CD8-positive, alpha-beta T cell (primary cell): ENCODE measurements at regions of chr1 and their contacts with region 1.

Region 1: GRCh38 chr1:100400404-100400803 is 48.1 kb downstream of the CDC14A start:
- DNase-seq: peak; percentile 39 to 90 (median 66)
- ATAC-seq: peak; percentile 82
- H3K4me3 ChIP-seq: peak overlapping the region; percentile 13 to 19
- H3K4me3 Mint-ChIP-seq: peak overlapping the region; percentile 73
- H3K27ac ChIP-seq: peak overlapping the region; percentile 59 to 80
- H3K27ac Mint-ChIP-seq: peak overlapping the region; percentile 92
- H3K4me1 ChIP-seq: peaks cover 93% of the 10 kb centered on the region
- H3K4me1 Mint-ChIP-seq: peaks cover 86% of the 10 kb centered on the region
- H3K27me3 ChIP-seq: no peaks in the 10 kb centered on the region
- H3K27me3 Mint-ChIP-seq: no peaks in the 10 kb centered on the region
- CTCF ChIP-seq: no peak

Region 2: DNA sequence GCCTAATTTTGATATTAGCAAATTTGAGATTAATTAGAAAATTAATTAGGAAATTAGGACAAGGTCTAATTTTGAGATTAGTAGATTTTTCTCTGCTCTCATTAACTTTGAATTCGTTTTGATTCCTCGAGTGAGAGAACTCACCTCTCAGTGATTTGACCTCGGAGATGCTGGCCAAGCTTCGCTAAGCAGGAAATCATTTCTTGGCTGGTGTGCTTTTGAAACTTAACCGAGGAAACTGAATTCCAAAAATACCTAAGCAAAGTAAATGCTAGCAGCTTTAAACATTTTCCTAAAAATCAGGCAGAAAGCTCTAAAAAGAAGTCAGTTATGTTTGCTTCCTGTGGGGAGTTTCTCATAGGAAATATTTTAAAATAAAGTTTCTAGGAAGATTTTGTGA is 13.2 kb before region 1 on chr1:
- CTCF ChIA-PET with region 1: interaction called, 9 read pairs
- POLR2A ChIA-PET with region 1: interaction called, 6 read pairs
- intact Hi-C with region 1: loop called in 1 of 2 experiments (anchors 1 kb)
- DNase-seq: peak in 1 of 9 experiments; percentile 43
- ATAC-seq: no peak
- H3K4me3 ChIP-seq: peak overlapping the region; percentile 3 to 6
- H3K4me3 Mint-ChIP-seq: peak overlapping the region; percentile 76
- H3K27ac ChIP-seq: peak overlapping the region; percentile 22 to 65
- H3K27ac Mint-ChIP-seq: peak overlapping the region; percentile 88
- H3K4me1 ChIP-seq: peaks cover 61% of the 10 kb centered on the region
- H3K4me1 Mint-ChIP-seq: peaks cover 88% of the 10 kb centered on the region
- H3K27me3 ChIP-seq: no peaks in the 10 kb centered on the region
- H3K27me3 Mint-ChIP-seq: no peaks in the 10 kb centered on the region
- CTCF ChIP-seq: no peak

Region 3: DNA sequence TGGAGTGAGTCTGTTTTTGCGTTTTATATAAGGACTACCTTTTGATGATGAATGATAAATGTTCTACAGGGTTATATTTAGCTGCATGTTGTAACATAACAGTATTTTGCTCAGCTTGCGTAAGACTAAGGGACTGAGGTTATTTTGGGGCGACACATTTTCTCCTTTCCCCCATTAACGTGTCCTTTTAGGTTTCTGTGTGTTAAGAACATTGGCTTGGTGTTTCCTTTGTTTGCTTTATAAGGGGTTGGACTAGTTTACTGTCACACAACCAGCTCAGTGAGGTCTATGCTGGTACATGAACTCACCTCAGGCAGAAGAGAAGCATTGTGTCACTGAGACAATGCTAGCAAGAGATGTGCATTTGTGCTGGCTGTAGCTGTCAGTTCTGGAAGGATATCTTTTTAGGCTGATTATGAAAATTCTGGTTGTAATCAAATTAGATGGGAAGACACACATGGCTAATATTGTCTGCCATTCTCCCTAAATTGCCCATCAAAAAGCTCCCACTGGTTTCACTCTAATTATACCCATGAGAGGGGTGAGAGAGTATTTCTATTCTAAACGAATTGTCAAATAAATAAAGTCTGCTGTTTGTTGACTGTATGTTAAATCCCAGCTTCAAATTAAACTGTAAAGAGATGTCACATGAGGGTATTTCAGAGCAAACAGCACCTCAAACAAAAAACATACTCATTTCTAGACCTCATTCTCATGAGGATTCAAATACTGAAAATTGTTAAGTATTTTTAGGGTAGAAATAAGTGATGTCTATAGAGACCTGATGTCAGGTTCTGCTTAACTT is 14.5 kb after region 1 on chr1:
- CTCF ChIA-PET with region 1: interaction called, 7 read pairs
- POLR2A ChIA-PET with region 1: interaction called, 7 read pairs
- intact Hi-C with region 1: loop called in 1 of 2 experiments (anchors 2 kb)
- DNase-seq: peak in 4 of 9 experiments; percentile 7 to 73 (median 37)
- ATAC-seq: peak; percentile 85
- H3K4me3 ChIP-seq: no peak overlapping the region
- H3K4me3 Mint-ChIP-seq: peak overlapping the region; percentile 35
- H3K27ac ChIP-seq: peak overlapping the region in 1 of 2 experiments; percentile 59
- H3K27ac Mint-ChIP-seq: peak overlapping the region; percentile 81
- H3K4me1 ChIP-seq: peaks cover 49% of the 10 kb centered on the region
- H3K4me1 Mint-ChIP-seq: peaks cover 83% of the 10 kb centered on the region
- H3K27me3 ChIP-seq: no peaks in the 10 kb centered on the region
- H3K27me3 Mint-ChIP-seq: no peaks in the 10 kb centered on the region
- CTCF ChIP-seq: no peak

Region 4: DNA sequence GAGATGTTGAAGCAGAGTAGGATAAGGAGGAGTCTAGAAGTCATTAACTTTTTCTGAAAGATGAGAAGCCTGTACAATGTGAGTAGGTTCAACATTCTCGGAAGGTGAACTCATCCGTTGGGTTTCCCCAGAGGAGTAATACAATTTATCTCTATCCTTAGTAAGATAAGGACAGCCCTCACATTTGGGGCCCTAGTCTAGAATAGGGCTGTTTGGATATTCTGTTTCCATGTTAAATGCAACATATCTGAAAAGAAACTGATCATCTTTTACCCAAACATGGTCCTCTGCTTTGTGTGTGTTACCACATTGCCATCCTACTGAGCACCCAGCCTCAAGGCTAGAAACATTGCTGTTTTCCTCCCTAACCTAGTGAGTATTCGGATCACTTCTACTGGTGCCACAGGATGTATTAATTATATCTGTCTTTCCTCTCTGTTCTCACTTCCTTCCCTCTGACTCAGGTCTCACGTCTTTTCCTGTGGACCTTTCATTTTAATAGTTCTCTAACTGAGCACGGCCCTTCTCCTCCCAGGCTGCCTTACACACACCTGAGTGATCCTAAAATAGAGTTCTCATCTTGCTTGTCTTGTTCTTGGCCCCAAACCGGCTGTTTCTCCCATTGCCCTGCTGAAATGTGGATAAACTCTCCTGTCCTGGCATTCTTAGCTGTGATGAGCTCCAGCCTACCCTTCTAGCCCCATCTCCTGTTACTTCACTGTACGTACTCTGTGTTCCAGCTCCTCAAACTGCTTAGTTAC is 43.6 kb after region 1 on chr1:
- CTCF ChIA-PET with region 1: interaction called, 6 read pairs
- POLR2A ChIA-PET with region 1: interaction called, 6 read pairs
- intact Hi-C with region 1: loop called (anchors 1 to 2 kb)
- DNase-seq: peak in 5 of 9 experiments; percentile 18 to 75 (median 39)
- ATAC-seq: peak; percentile 35
- H3K4me3 ChIP-seq: peak overlapping the region in 1 of 2 experiments; percentile 25
- H3K4me3 Mint-ChIP-seq: peak overlapping the region; percentile 71
- H3K27ac ChIP-seq: peak overlapping the region; percentile 73 to 88
- H3K27ac Mint-ChIP-seq: peak overlapping the region; percentile 97
- H3K4me1 ChIP-seq: peaks cover 71% of the 10 kb centered on the region
- H3K4me1 Mint-ChIP-seq: peaks cover 84% of the 10 kb centered on the region
- H3K27me3 ChIP-seq: no peaks in the 10 kb centered on the region
- H3K27me3 Mint-ChIP-seq: no peaks in the 10 kb centered on the region
- CTCF ChIP-seq: no peak